H1 (cell line): ENCODE measurements at regions of chr16 and their contacts with region 1.

Region 1: DNA sequence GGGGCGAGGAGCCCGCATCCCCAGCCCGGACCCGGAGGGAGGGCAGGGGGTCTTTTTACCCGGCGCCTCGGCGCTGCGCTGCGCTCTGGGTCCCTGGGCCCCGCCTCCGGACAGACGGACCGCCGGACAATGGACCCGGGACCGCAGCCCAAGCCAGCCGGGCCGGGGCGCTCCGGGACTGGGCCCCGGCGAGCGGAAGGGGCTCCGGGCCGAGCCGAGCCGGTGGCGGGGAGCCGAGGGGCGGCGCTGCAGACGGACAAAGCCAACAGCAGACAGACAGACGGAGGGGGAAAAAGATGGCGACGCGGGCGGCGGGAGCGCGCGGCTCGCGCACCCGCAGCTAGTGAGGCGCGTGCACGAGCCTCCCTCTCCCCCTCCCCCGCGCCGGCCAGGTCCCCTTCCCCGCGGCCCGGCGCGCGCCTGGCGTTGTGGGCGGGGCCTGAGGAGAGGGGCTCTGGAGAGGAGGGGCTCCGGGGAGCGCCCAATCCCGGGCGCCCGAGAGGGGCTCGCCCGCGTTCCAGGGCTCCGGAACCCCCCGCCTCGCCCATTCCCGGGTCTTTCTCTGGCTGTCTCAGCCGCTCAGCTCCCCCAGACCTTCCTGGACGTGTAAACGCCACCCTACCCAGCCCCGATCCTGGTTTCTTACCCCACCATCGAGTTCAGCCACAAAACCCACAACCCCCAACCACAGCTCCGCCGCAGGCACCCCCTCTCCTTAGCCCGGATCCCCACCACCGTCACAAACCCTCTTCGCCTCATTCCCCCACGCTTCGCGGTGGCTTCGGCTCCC is at the start of gene ZNF821:
- DNase-seq: peak; percentile 73 to 95
- H3K4me3 ChIP-seq: peak within 1 kb of the TSS; percentile 70 to 98 (median 79)
- H3K27ac ChIP-seq: peak within 1 kb of the TSS; percentile 90
- H3K4me1 ChIP-seq: peaks cover 6 to 10% (median 7%) of the 10 kb centered on the region in 4 experiments; a peak in 6 of 7 replicates
- H3K27me3 ChIP-seq: no peaks in the 10 kb centered on the region
- CTCF ChIP-seq: peak in 2 of 3 experiments; percentile 29 to 47; a peak in 2 of 4 replicates
- EP300 ChIP-seq: no peak
- POLR2A ChIP-seq: peak; percentile 78 to 92
- RAD21 ChIP-seq: peak in 1 of 2 experiments; percentile 41; a peak in 2 of 4 replicates
- total RNA-seq, gene ZNF821: 13.6 and 14.1 TPM in 2 replicates

Region 2: DNA sequence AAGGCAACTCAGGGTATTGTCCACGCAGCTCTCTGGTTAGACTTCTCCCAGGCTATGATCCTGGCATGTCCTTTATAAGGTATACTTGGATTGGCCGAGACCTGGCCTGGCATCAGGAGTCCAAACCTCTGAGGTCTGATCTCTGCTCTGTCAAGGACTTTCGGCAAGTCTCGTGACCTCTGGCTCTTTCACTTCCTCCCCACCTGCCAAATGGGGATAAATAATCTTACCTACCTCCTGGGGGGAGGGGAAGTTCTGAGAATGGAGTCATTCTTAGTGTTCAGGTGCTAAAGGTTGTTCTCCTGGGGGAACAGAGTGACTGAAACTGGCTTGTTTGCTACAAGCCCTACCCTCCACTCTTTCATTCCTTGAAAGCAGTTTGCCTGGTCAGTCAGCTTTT is 30.6 kb before region 1 on chr16:
- CTCF ChIA-PET with region 1: interaction called, 35 read pairs
- POLR2A ChIA-PET with region 1: interaction called, 6 read pairs
- DNase-seq: no peak
- H3K4me3 ChIP-seq: no peak overlapping the region
- H3K27ac ChIP-seq: no peak overlapping the region
- H3K4me1 ChIP-seq: no peaks in the 10 kb centered on the region
- H3K27me3 ChIP-seq: no peaks in the 10 kb centered on the region
- CTCF ChIP-seq: no peak
- EP300 ChIP-seq: no peak
- POLR2A ChIP-seq: no peak
- RAD21 ChIP-seq: no peak

Region 3: DNA sequence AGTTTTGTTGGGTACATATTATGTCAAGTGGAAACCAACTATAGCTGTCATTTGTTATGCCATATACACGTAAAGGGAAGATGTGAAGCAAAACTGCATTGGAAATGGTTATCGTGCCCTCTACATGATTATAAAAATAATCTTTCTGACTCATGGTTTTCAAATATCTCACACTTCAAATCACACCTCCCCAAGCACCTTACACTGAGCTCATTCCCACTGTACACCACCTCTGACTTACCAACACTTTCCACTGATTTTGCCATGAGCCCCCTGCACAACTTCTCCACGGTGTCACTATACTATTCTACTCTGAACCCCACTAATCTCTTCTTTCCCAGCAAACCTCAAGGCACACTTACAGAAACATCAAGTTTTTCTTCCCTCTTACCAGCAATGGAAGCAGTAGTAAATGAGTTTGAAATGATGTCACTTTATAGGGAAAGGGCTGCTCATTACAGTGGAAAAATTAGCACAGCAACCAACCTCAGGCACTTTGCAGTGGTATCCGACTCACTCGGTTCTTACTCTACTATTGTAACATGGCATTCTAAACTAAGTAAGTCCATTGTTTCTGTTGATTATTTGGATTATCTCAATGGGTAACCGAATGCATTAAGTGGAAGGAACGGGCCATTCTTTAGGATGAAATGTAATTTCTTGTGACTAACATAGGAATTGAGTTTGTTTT is 18.7 kb before region 1 on chr16:
- CTCF ChIA-PET with region 1: interaction called, 57 read pairs
- POLR2A ChIA-PET with region 1: interaction called, 3 read pairs
- DNase-seq: no peak
- H3K4me3 ChIP-seq: no peak overlapping the region
- H3K27ac ChIP-seq: no peak overlapping the region
- H3K4me1 ChIP-seq: no peaks in the 10 kb centered on the region
- H3K27me3 ChIP-seq: no peaks in the 10 kb centered on the region
- CTCF ChIP-seq: no peak
- EP300 ChIP-seq: no peak
- POLR2A ChIP-seq: no peak
- RAD21 ChIP-seq: no peak

Region 4: DNA sequence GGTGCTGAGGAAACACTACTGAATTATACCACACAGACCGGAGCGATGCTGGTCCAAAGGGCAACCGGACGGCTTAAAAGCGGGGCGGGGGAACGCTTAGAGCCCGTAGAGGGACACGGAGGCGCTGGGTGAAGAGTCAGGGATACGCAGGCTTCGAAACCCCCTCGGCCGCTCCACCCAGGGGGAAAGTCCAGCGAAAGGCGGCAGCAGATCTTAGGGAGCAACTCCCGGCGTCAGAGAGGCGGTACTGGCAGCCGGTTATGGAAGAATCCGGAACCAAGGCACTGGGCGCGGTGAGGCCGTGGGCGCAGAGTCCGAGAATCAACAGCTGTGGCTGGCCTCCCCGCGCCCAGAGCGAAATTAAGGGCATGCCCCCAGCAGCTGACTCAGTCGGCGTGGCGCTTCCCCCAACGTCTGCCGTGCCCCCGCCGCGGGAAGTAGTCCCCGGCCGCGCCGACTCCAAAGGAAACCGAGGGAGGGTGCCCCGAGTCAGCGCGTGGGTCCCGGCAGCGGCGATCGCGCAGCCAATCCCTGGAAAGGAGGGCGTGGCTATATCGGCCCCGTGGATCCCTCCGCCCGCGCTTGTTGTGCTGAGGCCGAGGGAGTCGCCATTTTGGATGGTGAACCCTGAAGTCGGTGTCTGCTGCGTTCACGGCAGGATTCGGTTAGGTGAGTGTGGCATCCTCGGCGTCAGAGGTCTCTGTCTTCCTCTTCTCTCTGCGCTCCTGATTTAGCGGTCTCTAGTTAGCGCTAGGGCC is 11.1 kb after region 1 on chr16 and contains the start of gene IST1:
- CTCF ChIA-PET with region 1: interaction called, 25 read pairs
- POLR2A ChIA-PET with region 1: interaction called, 70 read pairs
- DNase-seq: peak; percentile 88 to 95
- H3K4me3 ChIP-seq: peak within 1 kb of the TSS; percentile 90 to 95 (median 94)
- H3K27ac ChIP-seq: peak within 1 kb of the TSS; percentile 94
- H3K4me1 ChIP-seq: peaks cover 0 to 4% (median 0%) of the 10 kb centered on the region in 4 experiments; a peak in 2 of 7 replicates
- H3K27me3 ChIP-seq: no peaks in the 10 kb centered on the region
- CTCF ChIP-seq: no peak
- EP300 ChIP-seq: no peak
- POLR2A ChIP-seq: peak; percentile 76 to 89
- RAD21 ChIP-seq: no peak
- total RNA-seq, gene IST1: 245 and 248 TPM in 2 replicates

Region 5: GRCh38 chr16:71929048-71929447 is 45.0 kb after region 1 on chr16:
- CTCF ChIA-PET with region 1: interaction called, 13 read pairs
- POLR2A ChIA-PET with region 1: no interaction called
- DNase-seq: no peak
- H3K4me3 ChIP-seq: no peak overlapping the region
- H3K27ac ChIP-seq: no peak overlapping the region
- H3K4me1 ChIP-seq: no peaks in the 10 kb centered on the region
- H3K27me3 ChIP-seq: no peaks in the 10 kb centered on the region
- CTCF ChIP-seq: no peak
- EP300 ChIP-seq: no peak
- POLR2A ChIP-seq: no peak
- RAD21 ChIP-seq: no peak